CD8-positive, alpha-beta T cell (primary cell): ENCODE measurements at regions of chr21 and their contacts with region 1.

Region 1: GRCh38 chr21:32392880-32393676 is at the start of gene URB1:
- DNase-seq: peak; percentile 89 to 98 (median 94)
- ATAC-seq: peak; percentile 97
- H3K4me3 ChIP-seq: peak within 1 kb of the TSS; percentile 94 to 98
- H3K4me3 Mint-ChIP-seq: peak within 1 kb of the TSS; percentile 89
- H3K27ac ChIP-seq: peak within 1 kb of the TSS; percentile 65 to 83
- H3K27ac Mint-ChIP-seq: peak within 1 kb of the TSS; percentile 80
- H3K4me1 ChIP-seq: peaks cover 13% of the 10 kb centered on the region
- H3K4me1 Mint-ChIP-seq: peaks cover 50% of the 10 kb centered on the region
- H3K27me3 ChIP-seq: no peaks in the 10 kb centered on the region
- H3K27me3 Mint-ChIP-seq: peaks cover 7% of the 10 kb centered on the region
- CTCF ChIP-seq: no peak
- total RNA-seq, gene URB1: 5.4 to 5.9 TPM

Region 2: GRCh38 chr21:31731802-31732596 is 661.1 kb before region 1 on chr21 and contains the start of gene SCAF4:
- CTCF ChIA-PET with region 1: no interaction called
- POLR2A ChIA-PET with region 1: no interaction called
- intact Hi-C with region 1: loop called (anchors 5 kb)
- DNase-seq: peak; percentile 58 to 89 (median 74)
- ATAC-seq: peak; percentile 87
- H3K4me3 ChIP-seq: peak within 1 kb of the TSS; percentile 73 to 93
- H3K4me3 Mint-ChIP-seq: peak within 1 kb of the TSS; percentile 90
- H3K27ac ChIP-seq: peak within 1 kb of the TSS; percentile 82 to 83
- H3K27ac Mint-ChIP-seq: peak within 1 kb of the TSS; percentile 84
- H3K4me1 ChIP-seq: peaks cover 50% of the 10 kb centered on the region
- H3K4me1 Mint-ChIP-seq: peaks cover 14% of the 10 kb centered on the region
- H3K27me3 ChIP-seq: no peaks in the 10 kb centered on the region
- H3K27me3 Mint-ChIP-seq: no peaks in the 10 kb centered on the region
- CTCF ChIP-seq: no peak
- total RNA-seq, gene SCAF4: 53.0 to 53.4 TPM

Region 3: GRCh38 chr21:32298148-32298559 is 94.9 kb before region 1 on chr21:
- CTCF ChIA-PET with region 1: no interaction called
- POLR2A ChIA-PET with region 1: no interaction called
- intact Hi-C with region 1: no loop called
- DNase-seq: no peak
- ATAC-seq: no peak
- H3K4me3 ChIP-seq: no peak overlapping the region
- H3K4me3 Mint-ChIP-seq: no peak overlapping the region
- H3K27ac ChIP-seq: no peak overlapping the region
- H3K27ac Mint-ChIP-seq: no peak overlapping the region
- H3K4me1 ChIP-seq: no peaks in the 10 kb centered on the region
- H3K4me1 Mint-ChIP-seq: no peaks in the 10 kb centered on the region
- H3K27me3 ChIP-seq: no peaks in the 10 kb centered on the region
- H3K27me3 Mint-ChIP-seq: no peaks in the 10 kb centered on the region
- CTCF ChIP-seq: no peak

Region 4: GRCh38 chr21:32412162-32413014 is 19.3 kb after region 1 on chr21 and contains the start of gene EVA1C:
- CTCF ChIA-PET with region 1: interaction called, 6 read pairs
- POLR2A ChIA-PET with region 1: interaction called, 14 read pairs
- intact Hi-C with region 1: loop called (anchors 1 kb)
- DNase-seq: peak; percentile 51 to 90 (median 76)
- ATAC-seq: peak; percentile 71
- H3K4me3 ChIP-seq: peak within 1 kb of the TSS; percentile 63 to 96
- H3K4me3 Mint-ChIP-seq: peak within 1 kb of the TSS; percentile 95
- H3K27ac ChIP-seq: peak within 1 kb of the TSS; percentile 86 to 93
- H3K27ac Mint-ChIP-seq: peak within 1 kb of the TSS; percentile 96
- H3K4me1 ChIP-seq: peaks cover 35% of the 10 kb centered on the region
- H3K4me1 Mint-ChIP-seq: peaks cover 48% of the 10 kb centered on the region
- H3K27me3 ChIP-seq: no peaks in the 10 kb centered on the region
- H3K27me3 Mint-ChIP-seq: no peaks in the 10 kb centered on the region
- CTCF ChIP-seq: peak; percentile 23
- total RNA-seq, gene EVA1C: 6.9 to 10.3 TPM

Region 5: DNA sequence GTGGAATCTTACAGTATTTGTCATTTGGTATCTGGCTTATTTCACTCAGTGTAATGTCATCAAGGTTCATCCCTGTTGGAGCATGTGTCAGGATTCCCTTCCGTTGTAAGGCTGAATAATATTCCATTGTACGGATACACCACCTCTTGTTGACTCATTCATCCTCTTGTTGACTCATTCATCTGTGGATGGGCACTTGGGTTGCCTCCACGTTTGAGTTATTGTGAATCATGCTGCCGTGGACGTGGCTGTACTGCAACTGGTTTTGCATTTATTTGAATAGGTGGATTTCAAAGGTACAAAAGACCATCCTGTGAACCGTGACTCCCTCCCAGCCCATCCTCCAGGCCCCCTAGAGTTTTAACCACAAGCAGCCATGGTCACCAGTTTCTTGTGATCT is 204.1 kb after region 1 on chr21:
- CTCF ChIA-PET with region 1: interaction called, 16 read pairs
- POLR2A ChIA-PET with region 1: no interaction called
- intact Hi-C with region 1: no loop called
- DNase-seq: no peak
- ATAC-seq: no peak
- H3K4me3 ChIP-seq: no peak overlapping the region
- H3K4me3 Mint-ChIP-seq: no peak overlapping the region
- H3K27ac ChIP-seq: no peak overlapping the region
- H3K27ac Mint-ChIP-seq: peak overlapping the region; percentile 24
- H3K4me1 ChIP-seq: no peaks in the 10 kb centered on the region
- H3K4me1 Mint-ChIP-seq: no peaks in the 10 kb centered on the region
- H3K27me3 ChIP-seq: no peaks in the 10 kb centered on the region
- H3K27me3 Mint-ChIP-seq: no peaks in the 10 kb centered on the region
- CTCF ChIP-seq: no peak

Region 6: DNA sequence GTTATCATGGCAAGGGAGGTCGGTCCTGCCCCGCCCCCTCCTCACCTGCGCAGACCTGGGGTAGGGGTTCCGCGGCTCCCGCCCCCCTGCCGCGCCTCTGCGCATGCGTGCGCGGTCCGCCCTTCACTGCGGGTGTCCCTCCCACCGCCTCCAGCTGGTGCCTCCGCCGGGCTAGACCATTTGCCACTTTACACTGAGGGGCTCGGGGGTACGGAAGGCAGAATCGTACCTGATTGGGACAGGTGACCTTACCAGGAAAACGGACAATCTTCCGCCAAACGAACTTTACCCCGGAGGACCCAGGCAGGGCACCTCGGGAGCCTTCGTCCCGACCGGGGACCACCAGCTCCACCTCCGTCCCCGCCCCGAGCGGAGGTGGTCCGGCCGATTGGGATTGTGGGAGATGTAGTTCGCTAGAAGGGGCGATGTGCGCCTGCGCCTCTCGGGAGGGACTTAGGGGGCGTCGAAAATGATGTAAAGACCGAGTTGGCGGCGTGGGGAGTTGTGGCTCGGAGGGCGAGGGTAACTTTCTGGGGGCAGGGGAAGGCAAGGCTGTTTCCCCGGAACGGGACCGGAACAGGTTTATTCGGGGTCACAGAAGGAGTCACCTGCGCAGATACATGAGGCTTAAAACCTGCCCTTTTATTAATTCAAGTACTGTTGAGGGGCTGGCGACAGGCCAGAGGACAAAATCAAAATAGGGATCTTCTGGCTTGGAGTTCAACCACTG is 1098.5 kb after region 1 on chr21 and contains the start of gene DNAJC28:
- CTCF ChIA-PET with region 1: no interaction called
- POLR2A ChIA-PET with region 1: no interaction called
- intact Hi-C with region 1: loop called in 1 of 2 experiments (anchors 5 kb)
- DNase-seq: peak; percentile 87 to 98 (median 95)
- ATAC-seq: peak; percentile 97
- H3K4me3 ChIP-seq: peak within 1 kb of the TSS; percentile 81 to 95
- H3K4me3 Mint-ChIP-seq: peak within 1 kb of the TSS; percentile 92
- H3K27ac ChIP-seq: peak within 1 kb of the TSS; percentile 60 to 73
- H3K27ac Mint-ChIP-seq: peak within 1 kb of the TSS; percentile 94
- H3K4me1 ChIP-seq: peaks cover 9% of the 10 kb centered on the region
- H3K4me1 Mint-ChIP-seq: peaks cover 11% of the 10 kb centered on the region
- H3K27me3 ChIP-seq: no peaks in the 10 kb centered on the region
- H3K27me3 Mint-ChIP-seq: no peaks in the 10 kb centered on the region
- CTCF ChIP-seq: no peak
- total RNA-seq, gene DNAJC28: 0.22 to 0.33 TPM